ENCODE measurements at regions of chrX and their contacts with region 1.

Region 1: DNA sequence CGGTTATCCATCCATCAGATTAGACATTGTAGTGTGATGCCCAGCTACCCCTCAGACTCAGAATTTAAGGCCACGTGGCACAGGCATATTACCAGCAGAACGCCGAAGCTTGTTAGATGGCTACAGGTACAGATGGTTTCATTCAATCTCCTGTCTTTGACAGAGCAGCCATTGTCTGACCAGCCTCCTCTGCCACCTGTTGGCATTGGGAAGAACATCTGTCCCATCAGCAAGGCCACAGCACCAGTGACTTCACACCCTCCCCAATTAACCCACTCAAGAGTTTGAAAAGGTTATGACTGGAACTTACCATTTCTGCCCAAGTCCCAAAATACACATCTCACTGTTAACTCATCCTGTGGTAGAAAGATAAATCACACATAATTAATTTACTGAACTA is 22.0 kb upstream of the PHKA2 start:
- DNase-seq: no peak
- H3K4me3 ChIP-seq: no peak overlapping the region
- H3K27ac ChIP-seq: no peak overlapping the region
- H3K4me1 ChIP-seq: no peaks in the 10 kb centered on the region
- H3K27me3 ChIP-seq: no peaks in the 10 kb centered on the region
- CTCF ChIP-seq: peak in 1 of 2 donors; percentile 45

Region 2: GRCh38 chrX:18425199-18426003 is 580.5 kb before region 1 on chrX and contains the start of gene CDKL5:
- CTCF ChIA-PET with region 1: no interaction called
- dilution Hi-C with region 1: no loop called
- in situ Hi-C with region 1: no loop called
- intact Hi-C with region 1: no loop called
- DNase-seq: peak; percentile 94
- H3K4me3 ChIP-seq: peak within 1 kb of the TSS; percentile 66 to 79 (median 70)
- H3K27ac ChIP-seq: peak within 1 kb of the TSS; percentile 57
- H3K4me1 ChIP-seq: peaks cover 6% of the 10 kb centered on the region
- H3K27me3 ChIP-seq: peaks cover 4% of the 10 kb centered on the region
- CTCF ChIP-seq: no peak
- total RNA-seq, gene CDKL5: 8.3 to 10.1 TPM

Region 3: GRCh38 chrX:18984381-18985185 is 21.3 kb before region 1 on chrX:
- CTCF ChIA-PET with region 1: no interaction called
- dilution Hi-C with region 1: no loop called
- in situ Hi-C with region 1: no loop called
- intact Hi-C with region 1: loop called (anchors 1 kb)
- DNase-seq: peak; percentile 79
- H3K4me3 ChIP-seq: peak overlapping the region; percentile 71 to 79 (median 73)
- H3K27ac ChIP-seq: peak overlapping the region; percentile 57
- H3K4me1 ChIP-seq: no peaks in the 10 kb centered on the region
- H3K27me3 ChIP-seq: no peaks in the 10 kb centered on the region
- CTCF ChIP-seq: peak in 1 of 2 donors; percentile 48

Region 4: DNA sequence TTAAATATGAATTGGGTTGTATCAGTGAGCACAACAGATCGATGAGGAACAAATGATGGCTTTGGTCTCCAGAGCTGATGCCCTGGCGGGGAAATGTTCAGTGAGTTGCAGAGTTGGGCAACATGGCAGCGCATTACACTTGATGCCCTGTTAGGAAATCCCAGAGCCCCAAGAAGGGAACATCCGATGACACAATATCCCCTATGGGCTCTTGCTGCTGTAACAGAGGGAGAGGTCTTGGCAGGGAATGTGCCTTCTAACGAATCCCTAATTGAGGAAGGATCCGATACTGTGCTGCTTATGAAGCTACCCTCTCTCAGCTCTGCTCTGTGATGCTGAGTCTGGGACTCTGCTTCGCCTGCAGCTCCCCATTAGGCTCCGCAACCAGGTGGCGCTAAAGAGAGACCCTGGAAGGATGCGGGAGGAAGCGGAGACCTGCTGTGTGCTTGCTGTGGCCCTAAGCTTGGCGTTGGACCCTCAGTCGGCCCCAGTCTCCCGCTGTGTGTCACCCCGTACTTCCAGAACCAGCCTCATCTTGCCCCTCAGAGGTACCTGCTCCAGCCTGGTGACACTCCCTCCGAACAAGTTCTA is 376.7 kb after region 1 on chrX:
- CTCF ChIA-PET with region 1: no interaction called
- dilution Hi-C with region 1: no loop called
- in situ Hi-C with region 1: no loop called
- intact Hi-C with region 1: no loop called
- DNase-seq: peak; percentile 6
- H3K4me3 ChIP-seq: no peak overlapping the region
- H3K27ac ChIP-seq: no peak overlapping the region
- H3K4me1 ChIP-seq: no peaks in the 10 kb centered on the region
- H3K27me3 ChIP-seq: no peaks in the 10 kb centered on the region
- CTCF ChIP-seq: peak; percentile 38 to 68